Activated naive CD4-positive, alpha-beta T cell treated with anti-CD3 and anti-CD28 coated beads for 36 hours (primary cell): ENCODE measurements at regions of chr17 and their contacts with region 1.

Region 1: DNA sequence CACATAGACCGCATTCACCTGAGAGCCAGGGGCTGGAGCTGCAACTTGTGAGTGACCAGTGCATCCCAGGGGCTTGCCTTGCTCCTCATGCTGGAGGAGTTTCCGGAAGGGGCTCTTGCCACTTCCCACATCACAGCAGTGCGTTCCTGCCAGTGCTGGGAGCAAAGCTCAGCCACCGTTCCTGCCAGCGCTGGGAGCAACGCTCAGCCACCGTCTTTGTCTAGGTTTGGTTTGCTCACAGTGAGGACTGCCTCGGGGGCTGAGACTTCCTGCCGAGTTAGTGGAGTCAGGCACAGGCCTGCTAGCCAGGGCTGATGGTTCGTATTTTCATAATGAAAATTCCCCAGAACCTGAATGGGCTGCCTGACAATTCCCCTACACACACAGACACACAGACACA is 5.4 kb upstream of the CHRNE start:
- DNase-seq: peak; percentile 34
- H3K4me3 Mint-ChIP-seq: no peak overlapping the region
- H3K27ac Mint-ChIP-seq: no peak overlapping the region
- H3K4me1 Mint-ChIP-seq: peaks cover 4% of the 10 kb centered on the region
- H3K27me3 Mint-ChIP-seq: no peaks in the 10 kb centered on the region

Region 2: DNA sequence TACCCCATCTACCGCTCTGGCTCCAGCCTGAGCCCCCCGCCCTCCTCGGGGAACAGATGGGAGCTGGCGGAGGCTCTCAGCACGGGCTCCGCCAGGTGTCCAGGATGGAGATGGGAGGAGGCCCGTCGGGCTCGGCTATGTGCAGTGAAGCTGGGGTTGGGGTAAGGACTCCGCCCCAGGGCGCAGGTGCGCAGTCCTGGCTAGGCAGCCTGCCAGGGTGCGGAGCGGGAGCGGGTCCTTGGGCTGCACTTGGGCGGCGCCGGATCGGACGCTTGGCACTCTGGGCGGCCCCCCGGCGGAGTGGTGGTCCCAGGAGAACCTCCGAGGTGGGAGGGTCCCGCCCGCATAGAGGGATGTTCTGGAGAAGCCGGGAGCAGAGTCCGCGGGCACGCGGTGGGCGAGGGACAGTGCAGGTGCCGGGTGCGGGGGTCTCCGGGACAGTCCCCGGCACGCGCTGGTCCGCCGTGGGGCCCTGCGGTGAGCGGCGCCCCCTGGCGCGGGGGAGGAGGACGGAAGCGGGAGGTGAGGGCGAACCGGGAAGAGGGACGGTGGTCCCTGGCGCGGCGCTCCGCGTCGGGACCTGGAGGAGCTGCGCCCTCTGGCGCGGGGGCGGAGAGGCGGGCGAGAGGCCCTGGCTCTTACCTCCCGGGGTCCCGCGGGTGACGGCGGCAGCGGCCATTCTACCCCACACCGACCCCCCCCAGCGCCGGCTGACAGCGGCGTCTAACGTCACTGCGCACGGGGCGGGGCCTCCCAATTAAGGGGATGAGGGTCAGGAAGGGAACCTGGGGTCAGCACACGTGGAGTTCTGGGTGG is 78.9 kb after region 1 on chr17 and contains the start of gene CAMTA2:
- CTCF ChIA-PET with region 1: interaction called, 7 read pairs
- intact Hi-C with region 1: loop called (anchors 1 kb)
- DNase-seq: peak; percentile 87
- H3K4me3 Mint-ChIP-seq: peak within 1 kb of the TSS; percentile 88
- H3K27ac Mint-ChIP-seq: peak within 1 kb of the TSS; percentile 92
- H3K4me1 Mint-ChIP-seq: peaks cover 29% of the 10 kb centered on the region
- H3K27me3 Mint-ChIP-seq: no peaks in the 10 kb centered on the region
- total RNA-seq, gene CAMTA2: 79.1 to 79.5 TPM